GM12878 (cell line): ENCODE measurements at regions of chr12 and their contacts with region 1.

Region 1: DNA sequence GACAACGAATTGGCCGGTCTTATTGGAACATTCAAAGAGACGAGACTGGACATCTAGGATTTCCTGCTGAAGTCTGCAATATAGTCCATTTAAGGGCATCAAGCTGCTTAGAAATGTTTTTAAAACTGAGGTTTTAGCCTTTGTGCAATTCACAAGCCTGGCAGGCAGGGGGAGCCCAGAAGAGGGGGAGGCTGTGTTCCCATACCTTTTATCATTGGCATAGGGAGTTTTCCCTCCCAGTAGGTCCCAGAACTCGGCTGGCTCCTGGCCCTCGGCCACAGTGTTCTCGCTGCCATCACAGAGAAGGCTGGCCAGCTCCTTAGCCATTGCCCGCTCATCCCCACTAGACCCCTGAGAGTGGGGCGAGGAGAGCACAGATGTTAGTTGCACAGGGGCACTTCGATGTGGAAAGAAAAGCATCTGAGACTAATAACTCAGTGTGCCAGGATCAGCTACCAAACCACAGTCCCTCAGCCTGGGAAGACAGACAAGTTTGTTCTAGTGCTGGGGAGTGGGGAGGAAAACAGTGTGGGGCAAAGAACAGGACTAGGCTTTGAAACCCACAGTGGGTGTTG is 15.1 kb downstream of the AVIL start:
- DNase-seq: no peak
- ATAC-seq: peak; percentile 74
- H3K4me3 ChIP-seq: no peak overlapping the region
- H3K27ac ChIP-seq: no peak overlapping the region
- H3K4me1 ChIP-seq: no peaks in the 10 kb centered on the region
- H3K27me3 ChIP-seq: no peaks in the 10 kb centered on the region
- CTCF ChIP-seq: peak; percentile 65 to 82 (median 74)
- EP300 ChIP-seq: no peak
- POLR2A ChIP-seq: no peak
- RAD21 ChIP-seq: peak; percentile 61

Region 2: DNA sequence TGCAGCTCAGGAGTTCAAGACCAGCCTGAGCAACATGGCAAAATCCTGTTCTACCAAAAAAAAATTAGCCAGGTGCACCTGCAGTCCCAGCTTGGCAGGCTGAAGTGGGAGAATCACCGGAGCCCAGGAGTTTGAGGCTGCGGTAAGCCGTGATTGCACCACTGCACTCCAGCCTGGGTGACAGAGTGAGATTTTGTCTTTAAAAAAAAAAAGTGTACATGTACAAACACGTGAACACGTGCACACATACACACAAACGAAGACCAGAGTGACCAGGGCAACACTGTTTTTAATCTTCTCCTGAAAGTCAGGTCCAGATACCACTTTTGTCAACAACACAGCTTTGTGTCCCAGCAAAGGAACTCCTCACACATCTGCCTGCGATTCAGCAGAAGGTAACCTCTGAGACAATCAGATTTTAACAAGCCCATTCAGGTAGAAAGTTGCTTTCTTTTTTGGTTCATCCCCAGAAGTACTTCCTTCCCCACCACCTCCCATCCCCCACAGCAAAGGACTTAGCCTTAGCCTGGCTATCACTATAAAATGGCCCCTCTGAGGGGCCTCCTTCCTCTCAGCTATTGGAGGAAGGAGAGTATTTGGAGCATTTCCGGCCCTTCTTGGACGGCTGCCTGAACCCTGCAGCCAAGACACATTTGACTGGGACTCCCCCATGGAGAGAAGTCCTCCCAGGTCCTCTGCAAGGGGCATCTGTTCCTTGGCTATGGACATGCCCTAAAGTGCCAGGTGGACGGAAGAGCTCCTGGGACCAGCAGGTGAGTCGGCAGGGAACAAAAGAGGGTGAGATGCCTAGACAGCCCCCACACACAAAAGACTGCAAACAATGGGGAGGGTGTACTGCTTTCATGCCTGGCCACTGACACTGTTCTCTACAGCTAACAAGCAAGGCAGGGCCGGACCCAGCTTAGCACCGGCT is 33.3 kb after region 1 on chr12:
- CTCF ChIA-PET with region 1: interaction called, 10 read pairs
- POLR2A ChIA-PET with region 1: no interaction called
- RAD21 ChIA-PET with region 1: no interaction called
- SMC1A ChIA-PET with region 1: interaction called, 13 read pairs
- in situ Hi-C with region 1: no loop called
- intact Hi-C with region 1: no loop called
- DNase-seq: no peak
- ATAC-seq: peak; percentile 63
- H3K4me3 ChIP-seq: peak overlapping the region; percentile 46
- H3K27ac ChIP-seq: peak overlapping the region; percentile 75
- H3K4me1 ChIP-seq: peaks cover 91% of the 10 kb centered on the region
- H3K27me3 ChIP-seq: no peaks in the 10 kb centered on the region
- CTCF ChIP-seq: no peak
- EP300 ChIP-seq: no peak
- POLR2A ChIP-seq: peak; percentile 45; the same call in 1 of the 2 replicates
- RAD21 ChIP-seq: 0 out of 2 replicates have a peak, but pooled peaks have one; percentile 11